MCF 10A (cell line): ENCODE measurements at regions of chr5 and their contacts with region 1.

Region 1: DNA sequence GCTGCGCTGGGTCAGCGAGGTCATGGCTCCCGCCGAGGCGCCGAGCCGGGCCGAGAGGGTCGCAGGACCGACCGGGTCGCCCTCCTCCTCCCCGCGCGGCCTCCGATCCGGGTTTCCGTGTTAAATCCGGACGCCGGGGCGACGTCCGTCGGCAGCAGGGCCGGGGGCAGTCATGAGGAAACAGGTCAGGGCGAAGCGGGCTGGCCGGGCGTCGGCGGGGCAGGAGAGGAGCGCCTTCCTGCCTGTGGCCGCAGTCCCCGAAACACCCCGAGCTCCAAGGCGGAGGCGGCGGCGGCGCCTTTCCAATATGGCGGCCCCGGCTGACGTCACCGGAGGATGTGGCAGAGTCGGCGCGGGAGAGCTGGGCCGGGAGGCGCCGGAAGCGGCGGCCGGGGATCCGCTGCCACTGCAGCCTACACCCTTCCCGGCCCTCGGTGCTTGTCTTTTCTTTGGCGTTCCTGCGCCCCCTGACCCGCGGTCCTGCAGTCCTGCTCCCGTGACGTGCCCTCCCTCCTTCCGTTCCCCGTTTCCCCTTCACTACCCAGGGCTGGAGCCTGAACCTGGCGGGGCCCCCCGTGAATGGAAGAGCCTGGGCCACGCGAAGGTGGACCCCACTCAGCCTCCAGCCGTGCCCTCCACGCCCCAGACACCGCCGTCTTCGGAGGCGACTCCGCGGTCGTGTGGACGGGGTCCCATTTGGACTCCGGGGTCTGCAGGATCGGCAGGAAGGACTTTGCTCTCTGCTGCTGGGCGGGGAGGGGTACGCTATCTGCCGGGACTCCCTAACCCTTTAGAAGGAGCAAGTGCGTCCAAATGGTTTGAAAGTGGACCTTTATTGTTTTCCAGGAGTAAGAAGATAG is at the start of gene GOLPH3:
- DNase-seq: peak; percentile 87
- H3K4me3 Mint-ChIP-seq: peak within 1 kb of the TSS; percentile 98
- H3K27ac Mint-ChIP-seq: peak within 1 kb of the TSS; percentile 95
- H3K4me1 Mint-ChIP-seq: peaks cover 28% of the 10 kb centered on the region
- H3K27me3 Mint-ChIP-seq: no peaks in the 10 kb centered on the region
- CTCF ChIP-seq: no peak
- total RNA-seq, gene GOLPH3: 69.5 and 89.6 TPM in 2 replicates

Region 2: GRCh38 chr5:32027717-32028321 is 146.4 kb before region 1 on chr5:
- CTCF ChIA-PET with region 1: no interaction called
- POLR2A ChIA-PET with region 1: no interaction called
- intact Hi-C with region 1: no loop called
- DNase-seq: peak; percentile 98
- H3K4me3 Mint-ChIP-seq: peak overlapping the region; percentile 38
- H3K27ac Mint-ChIP-seq: peak overlapping the region; percentile 86
- H3K4me1 Mint-ChIP-seq: peaks cover 54% of the 10 kb centered on the region
- H3K27me3 Mint-ChIP-seq: no peaks in the 10 kb centered on the region
- CTCF ChIP-seq: no peak

Region 3: DNA sequence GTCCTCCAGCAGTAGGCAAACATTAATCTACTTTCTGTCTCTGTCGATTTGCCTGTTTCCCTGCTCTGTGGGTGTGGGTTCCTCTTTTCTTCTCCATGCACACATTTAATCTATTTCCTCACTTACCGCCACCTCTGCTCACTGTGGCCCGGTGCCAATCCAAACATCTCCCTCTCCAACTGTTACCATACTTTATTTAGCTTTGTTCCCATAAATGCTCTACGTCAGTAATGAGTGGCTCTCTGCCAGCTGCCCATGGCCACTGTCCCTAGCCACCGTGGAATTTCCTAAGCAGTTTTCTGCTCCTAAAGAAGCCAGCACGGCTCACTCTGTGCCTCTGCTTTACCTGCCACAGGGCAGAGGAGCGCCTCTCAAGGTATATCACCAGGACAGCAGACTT is 19.4 kb after region 1 on chr5:
- CTCF ChIA-PET with region 1: interaction called, 3 read pairs
- POLR2A ChIA-PET with region 1: interaction called, 12 read pairs
- intact Hi-C with region 1: no loop called
- DNase-seq: peak; percentile 96
- H3K4me3 Mint-ChIP-seq: peak overlapping the region; percentile 52
- H3K27ac Mint-ChIP-seq: no peak overlapping the region
- H3K4me1 Mint-ChIP-seq: peaks cover 10% of the 10 kb centered on the region
- H3K27me3 Mint-ChIP-seq: peaks cover 9% of the 10 kb centered on the region
- CTCF ChIP-seq: no peak